CD8-positive, alpha-beta T cell (primary cell): ENCODE measurements at regions of chr18 and their contacts with region 1.

Region 1: DNA sequence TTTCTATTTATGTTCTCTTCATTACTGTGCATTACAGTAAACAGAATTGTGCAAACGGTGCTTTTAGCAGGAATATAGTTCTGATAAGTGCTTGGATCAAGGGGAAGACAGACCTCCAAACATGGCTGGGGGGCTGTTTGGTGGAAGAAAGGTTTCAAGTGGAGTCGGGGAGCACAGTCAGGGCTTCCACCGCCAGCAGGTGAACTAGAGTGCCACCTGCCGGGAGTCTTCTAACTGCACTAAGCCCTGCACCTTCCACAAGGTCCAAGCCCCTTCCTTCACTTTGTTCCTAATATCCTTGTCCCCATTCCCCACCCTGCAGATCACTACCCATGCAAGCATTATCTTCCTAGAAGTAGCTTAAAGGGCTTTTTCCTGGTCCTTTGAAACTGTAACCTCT is 11.1 kb downstream of the ONECUT2 start:
- DNase-seq: no peak
- ATAC-seq: no peak
- H3K4me3 ChIP-seq: no peak overlapping the region
- H3K4me3 Mint-ChIP-seq: no peak overlapping the region
- H3K27ac ChIP-seq: no peak overlapping the region
- H3K27ac Mint-ChIP-seq: no peak overlapping the region
- H3K4me1 ChIP-seq: no peaks in the 10 kb centered on the region
- H3K4me1 Mint-ChIP-seq: peaks cover 2% of the 10 kb centered on the region
- H3K27me3 ChIP-seq: peaks cover under 1 to 5% of the 10 kb centered on the region in 2 experiments
- H3K27me3 Mint-ChIP-seq: peaks cover 59% of the 10 kb centered on the region
- CTCF ChIP-seq: no peak

Region 2: DNA sequence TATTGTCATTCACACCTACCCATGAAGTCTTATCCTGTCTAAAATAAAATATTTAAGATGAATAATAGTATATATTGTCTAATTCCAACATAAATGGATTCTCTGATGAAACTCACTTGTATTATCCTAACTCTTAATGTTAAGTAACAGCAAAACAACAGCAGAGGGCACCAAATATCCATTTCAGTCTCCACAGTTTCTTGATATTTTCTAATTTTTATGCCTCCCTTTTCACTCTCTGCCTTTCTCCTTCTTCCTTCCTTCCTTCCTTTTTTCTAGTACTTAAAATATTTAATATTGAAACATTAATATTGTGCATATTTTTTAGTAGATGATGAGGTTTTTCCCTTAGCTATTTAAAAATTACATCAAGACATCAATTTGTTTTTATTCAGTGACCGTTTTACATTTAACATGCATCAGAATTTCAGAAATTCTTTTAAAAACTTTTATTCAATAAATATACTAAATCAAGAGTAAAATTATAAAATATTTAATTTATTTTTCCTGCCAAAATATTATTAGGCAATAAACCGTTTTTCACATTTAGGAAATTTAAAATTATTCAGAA is 697.5 kb before region 1 on chr18:
- CTCF ChIA-PET with region 1: no interaction called
- POLR2A ChIA-PET with region 1: no interaction called
- intact Hi-C with region 1: loop called in 1 of 2 experiments (anchors 2 kb)
- DNase-seq: peak in 2 of 9 experiments; percentile 32 to 44
- ATAC-seq: no peak
- H3K4me3 ChIP-seq: no peak overlapping the region
- H3K4me3 Mint-ChIP-seq: no peak overlapping the region
- H3K27ac ChIP-seq: no peak overlapping the region
- H3K27ac Mint-ChIP-seq: no peak overlapping the region
- H3K4me1 ChIP-seq: peaks cover 7% of the 10 kb centered on the region
- H3K4me1 Mint-ChIP-seq: peaks cover 24% of the 10 kb centered on the region
- H3K27me3 ChIP-seq: no peaks in the 10 kb centered on the region
- H3K27me3 Mint-ChIP-seq: no peaks in the 10 kb centered on the region
- CTCF ChIP-seq: peak; percentile 67

Region 3: GRCh38 chr18:57258131-57258777 is 188.1 kb before region 1 on chr18:
- CTCF ChIA-PET with region 1: no interaction called
- POLR2A ChIA-PET with region 1: no interaction called
- intact Hi-C with region 1: no loop called
- DNase-seq: no peak
- ATAC-seq: no peak
- H3K4me3 ChIP-seq: no peak overlapping the region
- H3K4me3 Mint-ChIP-seq: no peak overlapping the region
- H3K27ac ChIP-seq: no peak overlapping the region
- H3K27ac Mint-ChIP-seq: no peak overlapping the region
- H3K4me1 ChIP-seq: no peaks in the 10 kb centered on the region
- H3K4me1 Mint-ChIP-seq: no peaks in the 10 kb centered on the region
- H3K27me3 ChIP-seq: no peaks in the 10 kb centered on the region
- H3K27me3 Mint-ChIP-seq: peaks cover 4% of the 10 kb centered on the region
- CTCF ChIP-seq: no peak

Region 4: DNA sequence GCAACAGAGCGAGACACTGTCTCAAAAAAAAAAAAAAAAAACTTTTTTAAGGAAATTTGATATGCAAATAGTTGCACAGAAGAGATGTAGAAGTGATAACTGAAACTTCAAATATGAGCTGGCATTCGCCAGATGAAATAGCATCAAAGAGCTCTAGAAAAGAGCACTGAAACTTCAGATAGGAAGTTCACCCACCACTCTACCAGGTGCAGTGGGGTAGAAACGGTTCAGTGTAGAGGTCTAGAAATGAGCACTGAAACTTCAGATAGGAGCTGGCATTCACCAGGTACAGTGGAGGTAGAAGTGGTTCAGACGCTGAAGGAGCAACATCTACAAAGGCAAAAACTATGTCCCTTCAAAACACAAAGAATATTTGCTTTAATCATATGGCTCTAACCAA is 20.1 kb before region 1 on chr18:
- CTCF ChIA-PET with region 1: no interaction called
- POLR2A ChIA-PET with region 1: no interaction called
- intact Hi-C with region 1: loop called in 1 of 2 experiments (anchors 1 kb)
- DNase-seq: no peak
- ATAC-seq: no peak
- H3K4me3 ChIP-seq: no peak overlapping the region
- H3K4me3 Mint-ChIP-seq: no peak overlapping the region
- H3K27ac ChIP-seq: no peak overlapping the region
- H3K27ac Mint-ChIP-seq: no peak overlapping the region
- H3K4me1 ChIP-seq: peaks cover 14% of the 10 kb centered on the region
- H3K4me1 Mint-ChIP-seq: peaks cover 18% of the 10 kb centered on the region
- H3K27me3 ChIP-seq: peaks cover 18 to 41% of the 10 kb centered on the region in 2 experiments
- H3K27me3 Mint-ChIP-seq: peaks cover 69% of the 10 kb centered on the region
- CTCF ChIP-seq: no peak

Region 5: DNA sequence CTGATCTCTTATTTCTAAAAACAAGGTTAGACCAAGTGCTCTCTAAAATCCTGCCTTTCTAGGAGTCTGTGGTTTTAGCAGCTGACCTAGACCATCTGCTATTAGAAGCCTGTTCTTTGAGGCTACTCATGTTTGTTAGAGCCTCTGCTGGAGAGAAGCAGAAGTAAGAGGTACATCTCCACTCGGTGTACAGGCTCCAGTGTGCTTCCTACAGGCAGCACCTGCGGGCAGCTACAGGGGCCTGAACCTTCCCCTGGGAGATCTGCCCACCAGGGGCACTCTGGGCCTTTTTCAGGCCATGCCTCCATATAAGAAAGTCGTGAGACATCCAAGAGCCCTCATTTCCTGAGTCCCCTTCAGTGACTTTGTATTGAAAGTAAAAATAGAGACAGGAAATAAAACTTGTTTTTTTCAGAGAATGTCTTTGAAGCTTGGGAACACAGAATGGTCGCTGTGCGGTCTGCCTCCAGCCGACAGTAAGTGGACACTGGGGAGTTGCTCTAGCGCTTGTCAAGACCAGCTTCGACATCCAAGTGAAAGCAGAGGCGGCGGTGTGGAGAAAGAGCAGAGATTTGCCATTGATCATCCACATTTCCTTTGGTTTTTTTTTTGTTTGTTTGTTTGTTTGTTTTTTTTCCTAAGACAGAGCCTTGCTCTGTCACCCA is 20.6 kb after region 1 on chr18:
- CTCF ChIA-PET with region 1: no interaction called
- POLR2A ChIA-PET with region 1: no interaction called
- intact Hi-C with region 1: no loop called
- DNase-seq: no peak
- ATAC-seq: no peak
- H3K4me3 ChIP-seq: no peak overlapping the region
- H3K4me3 Mint-ChIP-seq: no peak overlapping the region
- H3K27ac ChIP-seq: no peak overlapping the region
- H3K27ac Mint-ChIP-seq: no peak overlapping the region
- H3K4me1 ChIP-seq: no peaks in the 10 kb centered on the region
- H3K4me1 Mint-ChIP-seq: no peaks in the 10 kb centered on the region
- H3K27me3 ChIP-seq: peaks cover 0 to 4% of the 10 kb centered on the region in 2 experiments
- H3K27me3 Mint-ChIP-seq: peaks cover 21% of the 10 kb centered on the region
- CTCF ChIP-seq: no peak

Region 6: GRCh38 chr18:57505231-57505630 is 58.9 kb after region 1 on chr18:
- CTCF ChIA-PET with region 1: no interaction called
- POLR2A ChIA-PET with region 1: no interaction called
- intact Hi-C with region 1: loop called in 1 of 2 experiments (anchors 10 kb)
- DNase-seq: no peak
- ATAC-seq: no peak
- H3K4me3 ChIP-seq: no peak overlapping the region
- H3K4me3 Mint-ChIP-seq: no peak overlapping the region
- H3K27ac ChIP-seq: no peak overlapping the region
- H3K27ac Mint-ChIP-seq: no peak overlapping the region
- H3K4me1 ChIP-seq: no peaks in the 10 kb centered on the region
- H3K4me1 Mint-ChIP-seq: no peaks in the 10 kb centered on the region
- H3K27me3 ChIP-seq: no peaks in the 10 kb centered on the region
- H3K27me3 Mint-ChIP-seq: peaks cover 28% of the 10 kb centered on the region
- CTCF ChIP-seq: no peak

Region 7: GRCh38 chr18:58103339-58103985 is 657.1 kb after region 1 on chr18:
- CTCF ChIA-PET with region 1: no interaction called
- POLR2A ChIA-PET with region 1: no interaction called
- intact Hi-C with region 1: no loop called
- DNase-seq: no peak
- ATAC-seq: no peak
- H3K4me3 ChIP-seq: no peak overlapping the region
- H3K4me3 Mint-ChIP-seq: no peak overlapping the region
- H3K27ac ChIP-seq: no peak overlapping the region
- H3K27ac Mint-ChIP-seq: no peak overlapping the region
- H3K4me1 ChIP-seq: no peaks in the 10 kb centered on the region
- H3K4me1 Mint-ChIP-seq: no peaks in the 10 kb centered on the region
- H3K27me3 ChIP-seq: no peaks in the 10 kb centered on the region
- H3K27me3 Mint-ChIP-seq: peaks cover 4% of the 10 kb centered on the region
- CTCF ChIP-seq: no peak